Common myeloid progenitor, CD34-positive (primary cell): ENCODE measurements at regions of chr7 and their contacts with region 1.

Region 1: DNA sequence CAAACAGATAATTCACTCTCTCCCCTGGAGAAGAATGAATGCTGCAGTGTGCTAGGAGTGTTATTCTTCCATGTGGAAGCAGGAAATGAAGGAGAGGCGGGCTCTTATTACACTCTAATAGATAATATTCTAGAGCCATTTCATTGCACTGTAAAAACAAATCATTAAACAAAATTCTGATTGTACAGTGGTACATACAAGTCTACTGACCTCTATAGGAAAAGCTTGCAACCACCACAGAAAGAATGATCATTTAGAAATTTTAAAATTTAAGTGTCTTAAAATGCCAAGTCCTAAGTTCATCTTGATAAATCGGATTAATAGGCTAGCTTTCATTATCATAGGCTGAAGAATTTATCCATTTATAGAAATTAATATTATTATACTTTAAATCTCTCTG is 960.3 kb upstream of the LRRN3 start:
- DNase-seq: no peak
- H3K4me3 ChIP-seq: no peak overlapping the region
- H3K27ac ChIP-seq: no peak overlapping the region
- H3K4me1 ChIP-seq: no peaks in the 10 kb centered on the region
- H3K27me3 ChIP-seq: no peaks in the 10 kb centered on the region

Region 2: GRCh38 chr7:108890862-108891261 is 1239.8 kb before region 1 on chr7:
- CTCF ChIA-PET with region 1: no interaction called
- POLR2A ChIA-PET with region 1: interaction called, 10 read pairs
- DNase-seq: no peak
- H3K4me3 ChIP-seq: no peak overlapping the region
- H3K27ac ChIP-seq: no peak overlapping the region
- H3K4me1 ChIP-seq: no peaks in the 10 kb centered on the region
- H3K27me3 ChIP-seq: no peaks in the 10 kb centered on the region